HCT116 (cell line): ENCODE measurements at regions of chr5 and their contacts with region 1.

Region 1: DNA sequence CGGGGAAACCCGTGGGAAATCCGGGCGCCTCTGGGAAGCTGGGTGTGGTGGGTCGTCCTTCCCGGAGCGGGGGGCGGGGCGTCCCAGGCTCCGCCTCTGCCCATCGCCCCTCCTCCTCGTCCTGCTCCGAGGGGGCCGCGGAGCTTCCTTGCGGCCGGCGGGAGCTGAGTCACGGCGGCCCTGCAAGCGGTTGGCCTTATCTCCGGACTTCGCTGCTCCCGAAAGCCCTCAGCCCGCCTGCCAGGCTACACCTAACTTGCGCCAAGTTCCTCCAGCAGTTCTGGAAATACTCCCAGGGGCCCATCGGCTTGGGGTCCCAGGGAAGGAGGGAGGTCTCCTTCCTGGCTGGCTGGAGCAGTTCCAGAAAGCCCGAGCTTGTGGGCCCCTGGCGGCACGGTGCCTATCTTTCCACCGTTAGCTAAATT is 54.1 kb upstream of the CDKN2AIPNL start:
- DNase-seq: peak; percentile 68
- ATAC-seq: peak; percentile 83
- H3K4me3 ChIP-seq: peak overlapping the region; percentile 62 to 69
- H3K27ac ChIP-seq: peak overlapping the region; percentile 99
- H3K4me1 ChIP-seq: peaks cover 16 to 30% of the 10 kb centered on the region in 2 experiments
- H3K27me3 ChIP-seq: no peaks in the 10 kb centered on the region
- CTCF ChIP-seq: 0 out of 6 replicates have a peak, but pooled peaks of 1 of the 3 experiments have one; percentile 3
- POLR2A ChIP-seq: peak; percentile 85
- RAD21 ChIP-seq: no peak

Region 2: DNA sequence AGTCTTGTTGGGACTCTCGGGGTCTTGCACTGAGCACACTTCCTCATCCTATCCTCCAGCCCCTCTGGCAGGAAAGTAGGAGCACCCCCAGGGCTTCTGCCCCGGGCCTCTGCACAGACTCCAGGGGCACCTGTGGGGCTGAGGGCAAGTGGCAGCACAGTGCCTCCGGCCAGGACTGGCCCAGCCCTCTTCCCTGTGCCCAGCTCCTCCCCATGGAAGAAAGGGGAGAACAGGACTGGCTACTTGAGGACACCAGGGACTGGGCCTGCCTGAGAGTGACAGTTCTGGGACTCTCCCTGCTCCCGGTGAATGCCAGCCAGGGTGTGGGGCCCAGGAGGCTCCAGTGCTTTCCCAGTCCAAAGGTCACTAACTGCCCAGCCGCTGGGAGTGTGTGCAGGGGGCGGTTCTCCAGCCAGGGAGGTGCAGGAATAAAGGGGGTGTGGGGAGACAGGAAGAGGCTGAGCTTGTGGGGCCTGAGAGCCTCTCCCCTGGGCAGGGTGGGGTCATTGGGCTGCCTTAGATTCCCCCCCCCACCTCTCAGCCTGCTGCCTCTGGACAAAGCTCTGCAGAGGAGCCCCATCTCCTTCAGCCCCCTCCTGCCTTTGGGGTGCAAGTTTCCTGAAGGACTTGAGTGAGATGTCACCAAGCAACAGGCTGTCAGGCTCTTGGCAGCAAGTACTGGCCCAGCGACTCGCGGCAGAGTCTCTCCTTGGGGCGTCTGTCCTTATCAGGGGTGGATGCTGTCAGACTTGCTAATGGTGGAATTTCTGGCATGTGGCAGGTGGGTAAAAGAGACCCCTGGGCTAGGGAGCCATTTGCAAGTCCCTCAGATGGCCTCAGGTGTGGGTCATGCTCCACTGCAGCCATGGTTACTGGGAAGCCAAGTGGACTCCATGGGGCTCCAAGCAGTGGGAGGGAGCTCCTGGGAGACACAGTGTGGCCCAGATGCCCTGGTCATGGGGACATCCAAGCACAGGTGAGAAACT is 40.5 kb after region 1 on chr5:
- CTCF ChIA-PET with region 1: interaction called, 8 read pairs
- POLR2A ChIA-PET with region 1: interaction called, 21 read pairs
- RAD21 ChIA-PET with region 1: interaction called, 5 to 6 read pairs
- intact Hi-C with region 1: loop called (anchors 5 kb)
- DNase-seq: peak; percentile 66
- ATAC-seq: peak; percentile 80
- H3K4me3 ChIP-seq: peak overlapping the region; percentile 32 to 46
- H3K27ac ChIP-seq: peak overlapping the region; percentile 66
- H3K4me1 ChIP-seq: peaks cover 79 to 99% of the 10 kb centered on the region in 2 experiments
- H3K27me3 ChIP-seq: no peaks in the 10 kb centered on the region
- CTCF ChIP-seq: no peak
- POLR2A ChIP-seq: peak; percentile 29
- RAD21 ChIP-seq: no peak

Region 3: DNA sequence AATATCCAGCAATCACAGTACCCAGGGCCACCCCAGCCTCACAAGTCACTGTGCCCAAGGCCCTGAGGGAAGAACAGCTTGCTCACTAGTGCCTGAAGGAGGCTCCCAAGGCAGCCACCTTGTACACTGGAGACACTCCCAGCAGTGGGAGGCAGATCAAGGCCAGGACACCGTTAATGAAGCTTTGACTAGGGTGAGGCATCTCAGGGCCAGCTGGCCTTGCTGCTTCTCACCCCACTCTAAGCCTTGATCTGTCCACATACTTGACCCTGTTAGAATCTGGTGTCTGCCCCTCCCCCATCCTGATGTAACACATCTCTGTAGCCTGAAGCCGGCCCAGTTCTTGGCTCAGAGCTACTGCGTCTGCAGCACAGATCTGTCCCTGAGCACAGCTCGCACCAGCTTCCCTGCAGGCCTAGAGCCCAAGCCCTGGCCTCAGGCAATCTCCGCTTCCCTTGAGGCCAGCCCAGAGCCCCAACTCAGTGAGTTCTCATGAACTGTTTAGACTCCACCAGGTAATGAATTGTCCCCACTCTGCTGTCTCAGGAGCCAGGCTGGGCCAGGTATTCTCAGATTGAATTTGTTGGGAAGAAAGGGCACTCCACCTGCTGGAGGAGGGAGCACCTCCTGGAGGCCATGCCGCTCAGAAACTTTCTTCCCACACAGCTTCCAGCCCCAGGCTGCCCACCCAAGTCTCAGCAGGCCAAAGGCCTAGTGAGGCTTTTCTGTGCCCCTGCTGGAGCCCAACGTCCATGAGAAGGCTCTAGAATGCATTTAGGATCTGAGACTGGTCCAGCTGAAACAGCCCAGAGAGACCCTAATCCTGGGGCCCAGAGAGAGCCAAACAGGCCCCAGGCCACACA is 46.2 kb after region 1 on chr5:
- CTCF ChIA-PET with region 1: interaction called, 8 read pairs
- POLR2A ChIA-PET with region 1: interaction called, 21 read pairs
- RAD21 ChIA-PET with region 1: interaction called, 4 to 5 read pairs
- intact Hi-C with region 1: loop called (anchors 5 kb)
- DNase-seq: no peak
- ATAC-seq: peak; percentile 53
- H3K4me3 ChIP-seq: peak overlapping the region in 1 of 2 experiments; percentile 49; a peak in 3 of 4 replicates
- H3K27ac ChIP-seq: peak overlapping the region; percentile 98
- H3K4me1 ChIP-seq: peaks cover 67 to 78% of the 10 kb centered on the region in 2 experiments
- H3K27me3 ChIP-seq: no peaks in the 10 kb centered on the region
- CTCF ChIP-seq: peak in 2 of 3 experiments; percentile 45 to 54; a peak in 4 of 6 replicates
- POLR2A ChIP-seq: peak; percentile 42
- RAD21 ChIP-seq: no peak

Region 4: DNA sequence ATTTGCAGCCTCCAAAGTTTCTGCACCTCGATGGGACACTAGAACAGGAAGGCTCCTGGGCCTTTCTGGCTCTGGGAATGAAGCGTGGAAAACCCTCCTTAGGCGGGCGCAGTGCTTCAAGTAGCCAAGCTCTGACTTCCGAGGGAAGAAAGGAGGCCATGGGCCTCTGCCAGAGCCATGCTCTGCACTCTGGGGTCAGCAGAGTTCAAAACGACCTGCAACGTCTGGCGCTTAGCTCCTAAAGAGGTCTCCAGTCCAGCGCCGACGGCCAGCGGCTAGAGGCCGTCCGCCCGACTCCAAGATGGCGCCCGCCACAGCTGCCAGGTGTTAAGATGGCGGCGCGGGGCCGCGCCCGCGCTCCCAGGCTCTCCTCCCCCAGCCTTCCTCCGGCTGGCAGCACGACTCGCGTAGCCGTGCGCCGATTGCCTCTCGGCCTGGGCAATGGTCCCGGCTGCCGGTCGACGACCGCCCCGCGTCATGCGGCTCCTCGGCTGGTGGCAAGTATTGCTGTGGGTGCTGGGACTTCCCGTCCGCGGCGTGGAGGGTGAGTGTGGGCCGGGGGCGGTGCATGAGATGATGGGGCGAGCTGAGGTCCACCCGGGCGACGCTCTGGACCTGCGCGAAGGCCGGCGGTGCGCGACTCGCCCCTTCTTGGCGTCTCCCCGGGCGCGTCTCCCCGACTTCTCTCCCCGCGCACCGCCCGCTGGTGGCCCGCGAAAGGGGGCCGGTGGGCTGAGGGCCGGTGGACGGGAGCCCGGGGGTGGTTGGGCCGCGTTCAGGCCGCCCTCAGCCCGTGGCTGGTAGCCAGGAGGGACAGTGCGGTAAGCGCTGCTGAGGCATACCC is 408.4 kb after region 1 on chr5 and contains the start of gene TXNDC15:
- CTCF ChIA-PET with region 1: no interaction called
- POLR2A ChIA-PET with region 1: no interaction called
- RAD21 ChIA-PET with region 1: no interaction called
- intact Hi-C with region 1: no loop called
- DNase-seq: peak; percentile 56
- ATAC-seq: peak; percentile 87
- H3K4me3 ChIP-seq: peak within 1 kb of the TSS; percentile 72 to 83
- H3K27ac ChIP-seq: peak within 1 kb of the TSS; percentile 73
- H3K4me1 ChIP-seq: peaks cover 2 to 16% of the 10 kb centered on the region in 2 experiments; a peak in 3 of 4 replicates
- H3K27me3 ChIP-seq: no peaks in the 10 kb centered on the region
- CTCF ChIP-seq: no peak
- POLR2A ChIP-seq: peak; percentile 74
- RAD21 ChIP-seq: no peak
- total RNA-seq, gene TXNDC15: 17.8 TPM